Activated CD4-positive, alpha-beta memory T cell treated with anti-CD3 and anti-CD28 coated beads, Interleukin-2, amount 10 ng/mL, durations not matched to agents 7 days and 5 days (primary cell): ENCODE measurements at regions of chr10 and their contacts with region 1.

Region 1: GRCh38 chr10:28302638-28303488 is at the start of gene MPP7:
- DNase-seq: peak; percentile 96
- H3K4me3 Mint-ChIP-seq: peak within 1 kb of the TSS; percentile 83
- H3K27ac Mint-ChIP-seq: peak within 1 kb of the TSS; percentile 21
- H3K4me1 Mint-ChIP-seq: peaks cover 22% of the 10 kb centered on the region
- H3K27me3 Mint-ChIP-seq: peaks cover 29% of the 10 kb centered on the region
- total RNA-seq, gene MPP7: 4.0 to 4.3 TPM

Region 2: DNA sequence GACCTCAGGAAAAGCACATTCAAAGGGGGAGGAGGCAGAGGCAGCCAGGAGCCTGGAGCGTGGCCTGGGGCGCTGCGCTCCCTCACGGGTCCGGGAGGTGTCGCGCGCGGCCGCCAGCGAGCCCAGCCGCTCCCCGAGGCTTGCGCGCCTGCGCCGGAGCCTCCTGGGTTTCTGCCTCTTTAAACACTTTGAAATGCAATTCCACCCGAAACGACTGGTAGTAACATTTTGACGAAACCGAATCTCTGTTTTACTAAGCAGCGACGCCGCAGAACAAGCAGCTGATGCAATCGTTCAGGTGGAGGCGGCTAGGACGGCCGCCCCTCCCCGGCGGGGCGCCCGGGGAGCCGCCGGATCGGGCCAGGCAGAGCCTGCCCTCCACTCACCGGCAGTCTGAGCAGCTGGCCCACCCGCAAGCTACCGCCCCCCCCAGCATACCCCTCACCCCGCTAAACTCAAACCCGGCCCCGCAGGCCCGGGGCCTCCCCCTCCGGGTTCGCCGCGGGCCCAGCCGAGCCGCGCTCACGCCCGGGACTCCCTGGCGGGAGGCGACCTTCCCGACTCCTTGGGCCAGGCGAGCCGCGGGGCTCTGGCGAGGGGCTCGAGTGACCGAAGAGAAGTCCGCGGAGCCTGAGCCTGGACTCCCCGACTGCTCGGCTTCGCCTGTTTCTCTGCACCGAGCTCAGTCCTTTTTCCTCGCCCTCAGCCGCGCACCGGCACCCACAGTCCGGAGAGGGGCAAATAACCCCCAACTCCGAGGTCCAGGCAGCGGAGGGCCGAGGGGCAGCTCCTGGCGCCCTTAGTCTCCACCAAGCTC is 560.5 kb before region 1 on chr10:
- CTCF ChIA-PET with region 1: interaction called, 11 read pairs
- POLR2A ChIA-PET with region 1: no interaction called
- DNase-seq: peak; percentile 85
- H3K4me3 Mint-ChIP-seq: peak overlapping the region; percentile 65
- H3K27ac Mint-ChIP-seq: no peak overlapping the region
- H3K4me1 Mint-ChIP-seq: peaks cover 40% of the 10 kb centered on the region
- H3K27me3 Mint-ChIP-seq: peaks cover 72% of the 10 kb centered on the region

Region 3: DNA sequence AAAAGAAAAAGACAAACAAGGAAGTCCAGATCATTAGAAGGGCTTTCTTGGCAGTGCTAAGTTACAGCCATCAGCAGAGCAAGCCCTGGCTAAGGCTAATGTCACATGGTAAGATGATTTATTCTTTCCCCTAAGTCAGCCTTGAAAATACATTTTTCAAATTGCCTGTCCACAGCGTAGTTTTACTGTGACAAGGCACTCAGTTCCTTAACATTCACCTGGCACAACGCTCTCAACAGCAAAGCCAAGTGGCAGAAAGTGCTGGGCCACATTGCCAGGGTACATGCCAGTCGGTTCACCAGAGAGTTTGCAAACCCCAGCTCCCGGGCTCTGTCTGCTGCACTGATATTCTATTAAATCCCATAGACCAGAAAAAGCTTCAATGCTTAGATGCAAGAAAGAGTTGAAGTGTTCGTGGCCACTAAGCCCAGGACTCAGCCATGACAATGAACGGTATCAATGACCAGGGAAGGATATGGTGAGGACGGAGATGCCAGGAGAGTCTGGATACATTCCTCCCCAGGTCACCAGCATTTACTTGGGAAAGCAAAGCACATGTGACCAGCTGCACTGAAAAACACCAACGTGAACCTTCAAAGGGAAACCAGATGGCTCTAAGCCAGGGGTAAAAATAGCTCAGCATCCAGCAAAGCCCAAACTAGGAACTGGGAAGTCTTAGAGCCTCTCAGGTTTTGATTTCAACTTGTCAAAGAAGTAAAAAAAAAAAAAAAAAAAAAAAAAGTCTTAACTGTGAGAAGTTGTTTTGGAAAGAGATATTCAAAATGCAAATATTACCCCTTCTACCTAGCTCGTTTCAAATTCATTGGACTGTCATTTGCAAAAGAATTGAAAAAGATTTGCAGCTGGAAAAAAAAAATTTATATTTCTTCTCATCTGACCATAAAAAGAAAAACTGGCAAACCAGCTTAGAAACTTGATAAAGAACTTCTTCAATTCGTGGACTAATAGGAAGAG is 23.9 kb after region 1 on chr10:
- CTCF ChIA-PET with region 1: interaction called, 62 read pairs
- POLR2A ChIA-PET with region 1: interaction called, 9 read pairs
- DNase-seq: no peak
- H3K4me3 Mint-ChIP-seq: no peak overlapping the region
- H3K27ac Mint-ChIP-seq: no peak overlapping the region
- H3K4me1 Mint-ChIP-seq: peaks cover 15% of the 10 kb centered on the region
- H3K27me3 Mint-ChIP-seq: no peaks in the 10 kb centered on the region

Region 4: DNA sequence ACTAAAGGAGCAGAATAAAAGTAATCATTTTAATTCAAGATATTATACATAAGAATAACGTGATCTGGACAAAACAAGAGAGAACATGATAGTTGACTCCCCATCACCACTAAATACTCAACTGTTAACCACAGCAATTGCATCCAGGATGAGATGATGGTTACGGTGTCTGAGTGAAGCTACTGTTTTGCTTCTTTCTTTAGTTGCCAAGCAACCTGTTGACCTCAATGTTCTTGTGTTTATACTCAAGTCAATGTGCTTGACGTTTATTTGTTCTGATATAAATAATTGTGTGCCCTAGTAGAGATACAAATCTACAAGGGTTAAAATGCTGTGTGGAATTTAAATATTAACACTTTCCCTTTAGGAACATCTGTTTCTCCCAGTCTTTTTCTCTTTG is 31.4 kb after region 1 on chr10:
- CTCF ChIA-PET with region 1: interaction called, 62 read pairs
- POLR2A ChIA-PET with region 1: interaction called, 38 read pairs
- DNase-seq: peak; percentile 56
- H3K4me3 Mint-ChIP-seq: peak overlapping the region; percentile 81
- H3K27ac Mint-ChIP-seq: peak overlapping the region; percentile 94
- H3K4me1 Mint-ChIP-seq: peaks cover 52% of the 10 kb centered on the region
- H3K27me3 Mint-ChIP-seq: peaks cover 10% of the 10 kb centered on the region

Region 5: GRCh38 chr10:28367929-28368484 is 65.1 kb after region 1 on chr10:
- CTCF ChIA-PET with region 1: interaction called, 13 read pairs
- POLR2A ChIA-PET with region 1: interaction called, 13 read pairs
- DNase-seq: peak; percentile 73
- H3K4me3 Mint-ChIP-seq: peak overlapping the region; percentile 41
- H3K27ac Mint-ChIP-seq: peak overlapping the region; percentile 78
- H3K4me1 Mint-ChIP-seq: peaks cover 37% of the 10 kb centered on the region
- H3K27me3 Mint-ChIP-seq: peaks cover 16% of the 10 kb centered on the region

Region 6: GRCh38 chr10:28393966-28394568 is 91.2 kb after region 1 on chr10:
- CTCF ChIA-PET with region 1: interaction called, 12 read pairs
- POLR2A ChIA-PET with region 1: no interaction called
- DNase-seq: peak; percentile 66
- H3K4me3 Mint-ChIP-seq: no peak overlapping the region
- H3K27ac Mint-ChIP-seq: no peak overlapping the region
- H3K4me1 Mint-ChIP-seq: peaks cover 4% of the 10 kb centered on the region
- H3K27me3 Mint-ChIP-seq: peaks cover 5% of the 10 kb centered on the region

Region 7: DNA sequence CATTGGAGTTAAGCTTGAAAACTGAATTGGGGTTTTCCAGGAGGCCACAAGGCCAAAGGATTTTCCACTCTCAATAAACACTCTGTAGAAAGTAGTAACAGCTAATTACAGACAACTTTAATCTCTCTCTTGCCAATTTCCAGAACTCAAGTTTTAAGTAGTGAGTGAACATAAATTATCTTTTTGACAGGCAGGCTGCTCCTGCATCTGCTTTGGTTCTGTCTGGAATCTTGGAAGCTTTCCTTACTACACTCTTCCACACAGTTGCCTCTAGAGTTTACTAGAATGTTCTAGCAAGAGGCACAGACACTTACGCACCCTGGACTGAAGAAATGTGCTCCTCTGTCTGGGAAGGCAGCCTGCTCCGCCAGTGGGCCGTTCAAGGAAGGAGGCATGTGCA is 139.5 kb after region 1 on chr10:
- CTCF ChIA-PET with region 1: no interaction called
- POLR2A ChIA-PET with region 1: no interaction called
- DNase-seq: no peak
- H3K4me3 Mint-ChIP-seq: no peak overlapping the region
- H3K27ac Mint-ChIP-seq: no peak overlapping the region
- H3K4me1 Mint-ChIP-seq: no peaks in the 10 kb centered on the region
- H3K27me3 Mint-ChIP-seq: peaks cover 13% of the 10 kb centered on the region